Ascending aorta (tissue), 2 donors: ENCODE measurements at regions of chr1 and their contacts with region 1.

Region 1: DNA sequence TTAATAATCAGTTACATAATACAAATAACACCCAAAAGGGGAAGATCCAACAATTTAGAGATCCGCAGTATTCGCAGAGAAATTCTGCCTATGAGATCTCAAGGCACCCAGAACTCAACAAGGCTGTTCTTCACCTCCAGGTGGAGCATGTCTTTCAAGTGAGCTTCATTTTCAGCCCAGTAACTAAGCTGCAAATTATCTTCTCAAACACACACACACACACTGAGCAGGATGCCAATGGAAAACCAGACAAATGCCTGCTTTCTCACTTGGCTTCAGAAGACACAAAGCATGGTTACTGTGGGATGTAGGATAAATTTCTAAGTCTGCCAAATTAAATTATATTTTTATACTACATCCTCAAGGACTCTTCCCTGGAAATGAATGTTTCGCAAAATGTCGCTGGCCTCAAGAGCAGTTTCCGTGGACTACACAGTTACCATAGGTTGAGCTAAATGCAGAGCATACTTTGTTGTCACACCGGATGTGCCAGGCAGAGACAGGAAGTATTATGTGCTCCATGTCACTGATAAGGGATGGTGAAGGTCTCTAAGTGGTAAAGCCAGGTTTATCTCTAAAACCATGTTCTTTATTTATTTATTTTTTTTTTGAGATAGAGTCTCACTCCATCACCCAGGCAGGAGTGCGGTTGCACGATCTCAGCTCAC is 30.3 kb downstream of the UBR4 start:
- DNase-seq: no peak
- H3K4me3 ChIP-seq: no peak overlapping the region
- H3K27ac ChIP-seq: no peak overlapping the region
- H3K4me1 ChIP-seq: no peaks in the 10 kb centered on the region
- H3K27me3 ChIP-seq: no peaks in the 10 kb centered on the region
- CTCF ChIP-seq: peak in 1 of 3 experiments; percentile 9

Region 2: GRCh38 chr1:19232526-19232851 is 52.8 kb after region 1 on chr1:
- intact Hi-C with region 1: loop called (anchors 10 kb)
- DNase-seq: peak in 1 of 2 donors; percentile 8
- H3K4me3 ChIP-seq: no peak overlapping the region
- H3K27ac ChIP-seq: no peak overlapping the region
- H3K4me1 ChIP-seq: no peaks in the 10 kb centered on the region
- H3K27me3 ChIP-seq: no peaks in the 10 kb centered on the region
- CTCF ChIP-seq: no peak

Region 3: GRCh38 chr1:19715334-19716203 is 535.8 kb after region 1 on chr1:
- intact Hi-C with region 1: no loop called
- DNase-seq: peak; percentile 70 to 97
- H3K4me3 ChIP-seq: no peak overlapping the region
- H3K27ac ChIP-seq: no peak overlapping the region
- H3K4me1 ChIP-seq: peaks cover 0 to 5% of the 10 kb centered on the region in 2 donors
- H3K27me3 ChIP-seq: no peaks in the 10 kb centered on the region
- CTCF ChIP-seq: peak; percentile 83 to 90 (median 84)